ENCODE measurements at regions of chr7 and their contacts with region 1.

Region 1: GRCh38 chr7:85041605-85042216 is 145.1 kb downstream of the SEMA3D start:
- DNase-seq: peak; percentile 37
- H3K4me3 ChIP-seq: no peak overlapping the region
- H3K27ac ChIP-seq: no peak overlapping the region
- H3K27me3 ChIP-seq: no peaks in the 10 kb centered on the region
- CTCF ChIP-seq: peak; percentile 81

Region 2: GRCh38 chr7:85054306-85054705 is 12.6 kb after region 1 on chr7:
- CTCF ChIA-PET with region 1: interaction called, 16 read pairs
- POLR2A ChIA-PET with region 1: interaction called, 5 read pairs
- DNase-seq: no peak
- H3K4me3 ChIP-seq: no peak overlapping the region
- H3K27ac ChIP-seq: no peak overlapping the region
- H3K27me3 ChIP-seq: no peaks in the 10 kb centered on the region
- CTCF ChIP-seq: no peak

Region 3: DNA sequence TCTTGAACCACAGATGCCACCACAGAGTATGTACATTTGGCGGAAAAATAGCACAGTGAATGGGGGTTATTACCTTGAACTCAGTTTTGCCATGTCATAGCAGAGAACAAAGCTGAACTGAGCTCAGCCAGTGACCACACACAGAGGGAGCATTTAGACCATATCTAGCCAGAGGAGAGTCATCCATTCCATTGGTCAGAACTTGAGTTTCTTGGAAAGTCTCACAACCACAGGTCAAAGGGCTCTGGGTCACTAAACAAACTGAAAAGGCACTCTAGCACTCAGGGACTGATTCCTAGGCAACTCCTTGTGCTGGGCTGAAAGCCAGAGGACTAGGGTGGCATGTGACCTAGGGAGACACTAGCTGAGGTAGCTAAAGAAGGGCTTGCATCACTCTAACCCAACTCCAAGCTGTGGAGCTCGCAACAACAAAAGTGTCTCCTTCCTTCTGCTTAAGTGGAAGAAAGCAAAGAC is 384.8 kb after region 1 on chr7:
- CTCF ChIA-PET with region 1: interaction called, 10 read pairs
- POLR2A ChIA-PET with region 1: no interaction called
- DNase-seq: no peak
- H3K4me3 ChIP-seq: no peak overlapping the region
- H3K27ac ChIP-seq: no peak overlapping the region
- H3K27me3 ChIP-seq: no peaks in the 10 kb centered on the region
- CTCF ChIP-seq: no peak

Region 4: DNA sequence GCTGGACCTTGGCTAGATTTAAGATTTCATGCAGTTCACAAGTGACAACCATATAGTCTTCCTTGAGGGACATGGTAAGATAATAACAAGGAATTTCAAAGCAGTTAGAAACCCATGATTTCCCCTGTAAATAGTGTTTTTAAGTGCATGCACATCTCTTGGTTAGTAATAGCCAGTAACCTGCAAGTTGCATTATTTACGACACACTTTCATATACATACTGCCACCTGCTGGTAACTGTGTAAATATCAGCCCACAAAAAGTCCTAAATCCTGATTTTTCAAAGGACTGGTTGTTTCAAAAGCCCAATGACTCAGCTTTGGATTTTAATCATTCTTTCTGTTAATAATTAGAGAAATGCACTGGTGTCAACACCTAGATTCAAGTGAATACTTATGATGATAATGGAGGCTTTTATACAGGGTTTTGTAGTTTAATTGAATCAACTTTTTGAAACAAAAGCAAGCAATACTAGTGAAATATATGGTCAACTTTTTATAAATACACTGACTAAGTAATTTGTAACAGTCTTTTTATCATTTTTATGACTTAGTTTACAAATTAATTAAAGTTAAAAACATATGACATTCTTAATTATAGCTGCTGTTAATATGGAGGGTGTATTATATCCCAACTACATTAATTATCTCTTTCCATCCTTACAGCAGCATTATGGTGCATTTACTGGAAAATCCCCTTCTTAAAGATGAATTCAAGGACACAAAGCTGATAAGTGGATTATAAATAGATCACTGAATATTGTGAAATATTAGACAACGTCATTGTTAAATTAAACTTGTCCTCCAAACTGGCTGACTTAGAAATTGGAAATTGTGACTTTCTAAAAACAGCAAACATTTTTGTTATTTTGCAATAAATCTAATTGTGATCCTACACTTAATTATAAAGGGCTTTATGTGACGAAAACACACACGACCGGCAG is 512.8 kb after region 1 on chr7:
- CTCF ChIA-PET with region 1: interaction called, 68 read pairs
- POLR2A ChIA-PET with region 1: no interaction called
- DNase-seq: peak; percentile 62
- H3K4me3 ChIP-seq: no peak overlapping the region
- H3K27ac ChIP-seq: no peak overlapping the region
- H3K27me3 ChIP-seq: no peaks in the 10 kb centered on the region
- CTCF ChIP-seq: peak; percentile 72

Region 5: GRCh38 chr7:85829817-85830432 is 788.2 kb after region 1 on chr7:
- CTCF ChIA-PET with region 1: interaction called, 46 read pairs
- POLR2A ChIA-PET with region 1: no interaction called
- DNase-seq: no peak
- H3K4me3 ChIP-seq: no peak overlapping the region
- H3K27ac ChIP-seq: no peak overlapping the region
- H3K27me3 ChIP-seq: no peaks in the 10 kb centered on the region
- CTCF ChIP-seq: peak; percentile 44

Measured in AG04450 (cell line).